ENCODE measurements at regions of chr16 and their contacts with region 1.

Region 1: DNA sequence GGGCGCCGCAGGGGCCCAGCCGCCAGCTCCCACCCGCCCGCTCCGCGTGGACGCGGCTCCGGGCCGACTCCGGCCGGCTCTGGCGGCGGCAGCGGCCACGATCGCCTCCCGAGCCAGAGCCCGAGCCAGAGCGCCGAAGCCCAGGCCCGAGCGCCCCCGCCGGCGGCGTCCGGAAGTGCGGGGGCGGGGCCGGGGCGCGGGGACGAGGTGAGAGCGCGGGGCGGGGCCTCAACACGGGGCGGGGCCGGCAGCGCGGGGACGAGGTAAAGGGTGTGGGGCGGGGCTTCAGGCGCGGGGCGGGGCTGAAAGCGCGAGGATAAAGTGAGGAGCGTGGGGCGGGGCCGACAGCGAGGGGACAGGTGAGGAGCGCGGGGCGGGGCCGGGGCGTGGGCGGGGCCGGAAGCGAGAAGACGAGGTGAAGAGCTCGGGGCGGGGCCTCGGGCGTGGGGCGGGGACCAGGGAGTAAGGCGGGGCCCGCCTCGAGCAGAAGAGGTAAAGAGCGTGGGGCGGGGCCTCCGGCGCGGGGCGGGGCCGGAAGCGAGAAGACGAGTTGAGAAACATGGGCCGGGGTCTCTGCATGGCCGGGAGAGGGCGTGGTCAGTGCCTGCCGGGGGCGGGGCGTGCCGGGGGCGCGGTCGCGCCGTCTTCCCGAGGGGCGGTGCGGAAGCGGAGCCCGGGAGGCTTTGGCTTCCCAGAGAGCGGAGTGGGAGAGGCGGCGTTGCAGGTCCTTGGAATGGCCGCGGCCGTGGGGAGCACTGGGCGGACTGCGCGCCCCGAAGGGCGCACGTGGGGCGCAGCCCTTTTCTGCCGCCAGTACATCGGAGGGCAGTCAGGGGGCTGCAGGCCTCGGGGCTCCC is at the start of gene AXIN1:
- DNase-seq: peak; percentile 98 to 100 (median 99)
- ATAC-seq: peak; percentile 94
- H3K4me3 ChIP-seq: peak within 1 kb of the TSS; percentile 57
- H3K4me3 Mint-ChIP-seq: peak within 1 kb of the TSS; percentile 80 to 97 (median 93)
- H3K27ac ChIP-seq: peak within 1 kb of the TSS; percentile 75
- H3K27ac Mint-ChIP-seq: peak within 1 kb of the TSS; percentile 68 to 97 (median 94)
- H3K4me1 ChIP-seq: peaks cover 43 to 59% of the 10 kb centered on the region in 2 donors
- H3K4me1 Mint-ChIP-seq: peaks cover 25 to 61% (median 44%) of the 10 kb centered on the region in 7 donors
- H3K27me3 ChIP-seq: no peaks in the 10 kb centered on the region
- H3K27me3 Mint-ChIP-seq: no peaks in the 10 kb centered on the region
- total RNA-seq, gene AXIN1: 25.6 to 45.9 (median 37.5) TPM

Region 2: GRCh38 chr16:53346-54236 is 299.2 kb before region 1 on chr16 and contains the starts of genes POLR3K and SNRNP25:
- CTCF ChIA-PET with region 1: no interaction called
- POLR2A ChIA-PET with region 1: interaction called, 3 read pairs
- intact Hi-C with region 1: loop called in 1 of 2 experiments (anchors 1 kb)
- DNase-seq: peak; percentile 90 to 98 (median 96)
- ATAC-seq: peak; percentile 98
- H3K4me3 ChIP-seq: peak within 1 kb of the TSS; percentile 96
- H3K4me3 Mint-ChIP-seq: peak within 1 kb of the TSS; percentile 89 to 100 (median 98)
- H3K27ac ChIP-seq: peak within 1 kb of the TSS; percentile 73
- H3K27ac Mint-ChIP-seq: peak within 1 kb of the TSS; percentile 66 to 95 (median 92)
- H3K4me1 ChIP-seq: peaks cover 9 to 11% of the 10 kb centered on the region in 2 donors
- H3K4me1 Mint-ChIP-seq: peaks cover 22 to 45% (median 36%) of the 10 kb centered on the region in 7 donors
- H3K27me3 ChIP-seq: no peaks in the 10 kb centered on the region
- H3K27me3 Mint-ChIP-seq: no peaks in the 10 kb centered on the region
- total RNA-seq, gene POLR3K: 8.5 to 45.4 (median 18.9) TPM
- total RNA-seq, gene SNRNP25: 9.8 to 57.4 (median 11.7) TPM

Region 3: DNA sequence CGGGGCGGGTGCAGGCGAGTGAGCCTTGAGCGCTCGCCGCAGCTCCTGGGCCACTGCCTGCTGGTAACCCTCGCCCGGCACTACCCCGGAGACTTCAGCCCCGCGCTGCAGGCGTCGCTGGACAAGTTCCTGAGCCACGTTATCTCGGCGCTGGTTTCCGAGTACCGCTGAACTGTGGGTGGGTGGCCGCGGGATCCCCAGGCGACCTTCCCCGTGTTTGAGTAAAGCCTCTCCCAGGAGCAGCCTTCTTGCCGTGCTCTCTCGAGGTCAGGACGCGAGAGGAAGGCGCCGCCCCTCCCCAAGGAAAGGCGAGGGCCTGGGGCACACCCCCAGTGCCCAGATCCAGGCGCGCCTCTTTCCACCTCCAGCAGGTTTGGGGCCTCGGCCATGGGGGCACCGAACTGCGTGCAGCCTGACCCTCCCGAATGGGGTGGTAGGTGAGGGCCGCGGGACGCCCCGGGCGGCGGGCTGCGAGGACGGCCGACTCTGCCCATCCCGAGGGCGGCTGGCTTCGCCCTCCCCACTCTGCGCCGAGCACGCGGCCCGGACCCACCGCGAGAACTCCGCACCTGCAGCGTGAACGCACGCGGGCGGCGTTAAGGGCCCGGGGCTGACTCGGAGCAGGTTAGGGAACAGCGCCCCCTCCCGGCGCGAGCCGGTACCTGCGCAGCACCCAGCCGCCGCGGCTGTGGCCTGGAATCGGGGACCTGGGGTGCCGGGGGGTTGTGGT is 171.7 kb before region 1 on chr16:
- CTCF ChIA-PET with region 1: no interaction called
- POLR2A ChIA-PET with region 1: no interaction called
- intact Hi-C with region 1: loop called in 1 of 2 experiments (anchors 2 kb)
- DNase-seq: peak; percentile 73 to 91 (median 85)
- ATAC-seq: peak; percentile 96
- H3K4me3 ChIP-seq: peak overlapping the region; percentile 47
- H3K4me3 Mint-ChIP-seq: peak overlapping the region in 8 of 10 donors; percentile 30 to 69 (median 57)
- H3K27ac ChIP-seq: no peak overlapping the region
- H3K27ac Mint-ChIP-seq: no peak overlapping the region
- H3K4me1 ChIP-seq: peaks cover 3 to 9% of the 10 kb centered on the region in 2 donors
- H3K4me1 Mint-ChIP-seq: peaks cover 0 to 9% (median 4%) of the 10 kb centered on the region in 7 donors
- H3K27me3 ChIP-seq: peaks cover 20 to 23% of the 10 kb centered on the region in 2 donors
- H3K27me3 Mint-ChIP-seq: peaks cover 13 to 32% (median 19%) of the 10 kb centered on the region in 5 donors

Region 4: DNA sequence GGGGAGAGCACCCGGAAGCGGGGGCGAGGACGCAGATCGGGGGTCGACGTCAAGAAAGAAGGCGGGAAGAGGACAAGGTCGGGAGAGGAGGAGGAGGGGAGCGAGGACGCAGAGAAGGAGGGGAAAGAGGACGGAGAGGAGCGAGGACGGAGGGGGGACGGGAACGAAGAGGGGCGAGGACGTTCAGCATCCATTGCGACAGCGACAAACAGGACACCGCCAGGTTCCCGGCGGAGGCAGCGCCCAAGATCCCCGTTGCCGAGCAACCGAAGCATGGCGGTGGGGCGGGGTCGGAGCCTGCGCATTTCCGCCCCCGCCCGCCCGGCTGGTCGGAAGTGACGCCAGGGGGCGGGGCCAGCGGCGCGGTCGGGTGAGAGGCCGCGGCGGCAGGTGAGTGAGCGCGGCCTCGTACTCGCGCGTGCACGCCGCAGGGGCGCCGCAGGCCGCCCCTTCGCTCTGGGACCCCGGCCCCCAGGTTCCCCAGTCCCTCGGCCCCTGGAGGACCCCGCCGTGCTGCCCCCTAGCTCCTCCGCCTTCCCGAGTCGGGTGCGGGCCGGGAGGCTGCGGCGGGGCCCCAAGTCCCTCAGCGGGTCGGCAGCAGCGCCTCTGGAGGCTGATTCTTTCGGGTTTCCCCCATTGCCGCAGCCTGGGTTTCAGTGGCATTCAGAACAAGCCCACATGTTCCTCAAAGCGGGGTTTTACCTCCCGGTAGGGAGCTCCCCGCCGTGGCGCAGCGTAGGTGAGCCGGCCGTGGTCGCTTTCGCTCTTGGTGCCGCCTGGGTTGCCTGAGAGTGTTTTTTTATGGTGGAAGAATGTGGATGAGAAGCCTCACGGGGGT is 118.1 kb before region 1 on chr16 and contains the start of gene FAM234A:
- CTCF ChIA-PET with region 1: interaction called, 7 read pairs
- POLR2A ChIA-PET with region 1: interaction called, 8 read pairs
- intact Hi-C with region 1: loop called (anchors 1 kb)
- DNase-seq: peak; percentile 93 to 98 (median 97)
- ATAC-seq: peak; percentile 90
- H3K4me3 ChIP-seq: peak within 1 kb of the TSS; percentile 82
- H3K4me3 Mint-ChIP-seq: peak within 1 kb of the TSS; percentile 81 to 99 (median 96)
- H3K27ac ChIP-seq: peak within 1 kb of the TSS; percentile 99
- H3K27ac Mint-ChIP-seq: peak within 1 kb of the TSS; percentile 90 to 100 (median 99)
- H3K4me1 ChIP-seq: peaks cover 0 to 5% of the 10 kb centered on the region in 2 donors
- H3K4me1 Mint-ChIP-seq: peaks cover 7 to 25% (median 16%) of the 10 kb centered on the region in 7 donors
- H3K27me3 ChIP-seq: no peaks in the 10 kb centered on the region
- H3K27me3 Mint-ChIP-seq: peaks cover 0 to 3% (median 0%) of the 10 kb centered on the region in 5 donors
- total RNA-seq, gene FAM234A: 30.4 to 43.9 (median 32.9) TPM

Region 5: GRCh38 chr16:324451-325334 is 28.1 kb before region 1 on chr16:
- CTCF ChIA-PET with region 1: interaction called, 3 read pairs
- POLR2A ChIA-PET with region 1: interaction called, 11 read pairs
- intact Hi-C with region 1: loop called (anchors 1 kb)
- DNase-seq: peak; percentile 68 to 94 (median 91)
- ATAC-seq: peak; percentile 88
- H3K4me3 ChIP-seq: peak overlapping the region; percentile 71
- H3K4me3 Mint-ChIP-seq: peak overlapping the region; percentile 73 to 90 (median 86)
- H3K27ac ChIP-seq: peak overlapping the region; percentile 92
- H3K27ac Mint-ChIP-seq: peak overlapping the region; percentile 66 to 99 (median 96)
- H3K4me1 ChIP-seq: peaks cover 50 to 51% of the 10 kb centered on the region in 2 donors
- H3K4me1 Mint-ChIP-seq: peaks cover 26 to 74% (median 53%) of the 10 kb centered on the region in 7 donors
- H3K27me3 ChIP-seq: no peaks in the 10 kb centered on the region
- H3K27me3 Mint-ChIP-seq: no peaks in the 10 kb centered on the region

Region 6: DNA sequence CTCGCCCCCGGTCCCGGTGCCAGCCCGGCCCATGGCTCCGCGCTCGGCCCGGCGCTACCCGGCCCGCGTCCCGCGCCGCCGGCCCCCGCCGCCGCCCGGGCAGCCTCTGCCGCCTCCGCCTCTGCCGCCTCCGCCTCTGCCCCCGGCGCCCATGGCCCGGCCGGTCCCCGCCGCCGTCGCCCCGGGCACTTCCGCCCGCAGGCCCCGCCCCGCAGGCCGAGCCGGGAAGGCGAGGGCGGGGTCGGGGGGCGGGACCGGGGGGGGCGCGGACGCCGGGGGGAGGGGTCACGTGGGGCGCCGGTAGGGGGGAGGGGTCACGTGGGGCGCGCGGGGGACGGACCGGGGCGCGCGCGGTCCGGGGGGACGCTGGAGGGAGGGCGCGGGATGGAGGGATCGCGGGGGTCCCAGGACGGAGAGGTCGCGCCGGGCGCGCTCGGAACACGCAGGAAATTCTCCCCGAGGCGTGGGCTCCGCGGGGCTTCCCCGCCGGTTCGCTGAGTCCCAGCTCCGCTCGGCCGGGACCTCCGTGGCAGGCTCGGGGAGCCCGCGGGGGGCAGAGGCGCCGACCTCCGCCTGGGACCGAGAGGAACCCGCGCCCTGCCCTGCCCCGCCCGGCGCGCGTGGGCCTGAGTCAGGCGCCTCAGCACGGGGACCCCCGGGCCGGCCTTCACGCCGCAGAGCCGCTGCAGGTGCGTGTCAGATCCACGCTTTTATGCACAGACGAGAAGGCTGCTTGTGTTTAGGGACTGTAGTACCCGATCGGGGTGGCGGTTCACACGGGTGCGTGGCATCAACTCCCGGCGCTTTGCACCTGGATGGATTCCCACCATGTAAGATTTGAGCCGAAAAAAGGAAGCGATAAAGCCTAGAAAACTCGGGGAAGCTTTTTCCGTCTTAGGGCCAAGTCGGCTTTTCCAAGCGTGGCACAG is 29.3 kb after region 1 on chr16 and contains the start of gene PGAP6:
- CTCF ChIA-PET with region 1: no interaction called
- POLR2A ChIA-PET with region 1: interaction called, 10 read pairs
- intact Hi-C with region 1: loop called in 1 of 2 experiments (anchors 1 kb)
- DNase-seq: peak; percentile 36 to 83 (median 51)
- ATAC-seq: peak; percentile 83
- H3K4me3 ChIP-seq: peak within 1 kb of the TSS; percentile 79
- H3K4me3 Mint-ChIP-seq: peak within 1 kb of the TSS; percentile 85 to 97 (median 90)
- H3K27ac ChIP-seq: peak within 1 kb of the TSS; percentile 81
- H3K27ac Mint-ChIP-seq: peak within 1 kb of the TSS; percentile 58 to 98 (median 90)
- H3K4me1 ChIP-seq: peaks cover 18 to 23% of the 10 kb centered on the region in 2 donors
- H3K4me1 Mint-ChIP-seq: peaks cover 7 to 32% (median 21%) of the 10 kb centered on the region in 7 donors
- H3K27me3 ChIP-seq: no peaks in the 10 kb centered on the region
- H3K27me3 Mint-ChIP-seq: peaks cover 0 to 11% (median 0%) of the 10 kb centered on the region in 5 donors
- total RNA-seq, gene PGAP6: 32.2 to 107 (median 89.4) TPM

Region 7: DNA sequence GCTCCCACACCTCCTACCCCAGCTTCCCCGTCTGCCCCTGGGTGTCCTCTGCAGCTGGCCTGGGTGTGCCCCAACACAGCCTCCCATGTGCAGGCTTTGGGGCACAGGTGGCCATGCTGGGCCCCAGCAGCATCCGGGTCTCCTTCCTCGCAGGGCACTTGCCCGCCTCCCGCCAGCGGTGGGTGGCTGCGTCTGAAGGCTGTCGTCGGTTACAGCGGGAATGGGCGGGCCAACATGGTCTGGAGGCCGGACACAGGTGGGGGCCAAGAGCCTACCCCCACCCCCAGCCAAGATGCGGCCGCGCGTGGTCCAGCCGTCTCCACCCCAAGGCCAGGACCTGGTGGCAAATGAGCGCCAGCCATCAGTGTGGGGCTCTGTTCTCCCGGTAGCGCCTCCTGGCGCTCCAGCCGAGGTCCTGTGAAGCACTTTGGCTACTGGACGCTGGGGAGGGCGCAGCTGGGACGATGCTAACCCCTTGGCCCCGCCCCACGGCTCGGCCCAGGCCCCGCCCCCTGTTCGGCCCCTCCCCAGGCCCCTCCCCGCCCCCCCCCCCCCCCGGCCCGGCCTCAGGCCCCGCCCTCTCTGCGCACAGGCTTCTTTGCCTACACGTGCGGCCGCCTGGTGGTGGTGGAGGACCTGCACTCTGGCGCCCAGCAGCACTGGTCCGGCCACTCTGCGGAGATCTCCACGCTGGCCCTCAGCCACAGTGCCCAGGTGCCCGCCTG is 307.8 kb after region 1 on chr16:
- CTCF ChIA-PET with region 1: no interaction called
- POLR2A ChIA-PET with region 1: no interaction called
- intact Hi-C with region 1: loop called in 1 of 2 experiments (anchors 2 kb)
- DNase-seq: peak in 8 of 9 donors; percentile 44 to 74 (median 59)
- ATAC-seq: peak; percentile 90
- H3K4me3 ChIP-seq: no peak overlapping the region
- H3K4me3 Mint-ChIP-seq: peak overlapping the region in 3 of 10 donors; percentile 33 to 37 (median 35)
- H3K27ac ChIP-seq: peak overlapping the region; percentile 3
- H3K27ac Mint-ChIP-seq: peak overlapping the region in 2 of 9 donors; percentile 45 to 46
- H3K4me1 ChIP-seq: peaks cover 0 to 7% of the 10 kb centered on the region in 2 donors
- H3K4me1 Mint-ChIP-seq: peaks cover 0 to 9% (median 4%) of the 10 kb centered on the region in 7 donors
- H3K27me3 ChIP-seq: no peaks in the 10 kb centered on the region
- H3K27me3 Mint-ChIP-seq: no peaks in the 10 kb centered on the region

Measured in naive thymus-derived CD4-positive, alpha-beta T cell (primary cell).